ENCODE measurements at regions of chr19 and their contacts with region 1.

Region 1: DNA sequence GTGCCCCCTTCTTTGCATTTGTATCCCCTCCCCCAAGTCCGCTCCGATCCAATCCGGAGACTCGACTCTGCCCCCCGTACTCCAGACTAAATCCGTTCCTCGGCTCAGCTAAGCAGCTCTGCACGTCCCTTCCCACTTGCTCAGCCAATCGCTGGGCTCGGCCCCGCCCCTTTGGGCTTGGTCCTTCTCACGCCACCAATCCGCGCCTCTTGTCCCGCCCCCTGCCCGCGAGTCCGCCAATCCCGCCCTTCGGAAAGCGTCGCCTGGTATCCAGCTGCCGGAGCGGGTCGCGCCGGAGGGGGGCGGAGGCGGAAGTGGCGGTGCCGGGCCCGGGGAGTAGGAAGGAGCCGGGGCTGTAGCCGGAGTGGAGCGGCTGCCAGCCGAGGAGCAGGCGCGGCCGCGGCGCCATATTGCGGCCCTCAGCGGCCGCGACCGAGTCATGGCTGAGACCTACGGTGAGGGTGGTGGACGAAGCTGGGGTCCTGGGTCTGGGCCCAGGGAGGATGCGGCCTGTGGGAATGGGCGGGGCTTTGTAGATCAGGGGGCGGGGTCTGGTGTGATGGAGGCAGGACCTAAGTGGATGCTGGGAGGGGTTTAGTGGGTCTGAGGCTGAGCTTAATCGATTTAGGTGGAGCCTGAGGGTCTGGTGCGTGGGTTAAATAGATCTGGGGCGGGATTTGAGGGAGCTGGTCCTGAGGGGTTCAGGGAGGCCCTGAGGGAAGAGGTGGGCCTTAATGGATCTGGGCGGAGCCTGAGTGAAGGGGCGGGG is at the start of gene RAB4B:
- DNase-seq: peak; percentile 100
- H3K4me3 Mint-ChIP-seq: peak within 1 kb of the TSS; percentile 89
- H3K27ac Mint-ChIP-seq: peak within 1 kb of the TSS; percentile 99
- H3K4me1 Mint-ChIP-seq: peaks cover 39% of the 10 kb centered on the region
- H3K27me3 Mint-ChIP-seq: no peaks in the 10 kb centered on the region
- total RNA-seq, gene RAB4B: 52.8 to 54.7 TPM

Region 2: DNA sequence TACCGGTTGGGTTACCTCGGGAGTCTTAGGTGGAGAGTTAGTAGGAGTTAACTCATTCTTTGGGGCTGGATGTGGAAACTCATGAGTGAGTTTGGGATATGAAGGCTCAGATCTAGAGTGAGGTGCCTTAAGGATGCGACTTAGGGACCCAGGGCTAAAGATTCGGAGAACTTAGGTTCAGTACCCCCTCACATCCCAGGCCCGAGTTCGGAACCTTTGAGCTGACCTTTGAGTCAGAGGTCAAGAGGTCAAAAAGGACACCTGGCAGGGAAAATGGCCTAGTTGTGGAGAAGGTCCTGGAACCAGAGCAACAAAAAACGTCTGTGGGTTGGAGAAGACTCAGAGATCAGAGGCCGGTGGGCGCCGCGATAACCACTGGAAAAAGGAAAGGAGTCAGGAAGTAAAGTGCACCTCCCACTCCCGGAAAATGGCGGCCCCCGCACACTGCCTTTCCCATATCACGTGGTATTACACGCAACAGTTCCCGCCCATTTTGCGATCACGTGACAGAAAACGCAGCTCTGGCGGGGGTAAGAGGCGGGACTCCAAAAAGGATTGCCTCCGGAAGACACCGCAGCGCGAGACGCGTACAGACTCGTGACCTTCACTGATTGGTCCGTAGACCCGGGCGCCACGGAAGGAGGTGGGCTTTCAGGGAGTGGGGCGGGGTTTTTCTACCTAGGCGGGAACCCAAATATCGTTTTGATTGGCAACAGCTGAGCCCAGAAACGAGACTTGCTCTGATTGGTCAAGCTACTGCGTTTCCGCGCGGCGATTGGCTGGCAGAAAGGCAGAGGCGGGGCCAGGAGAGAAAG is 27.9 kb before region 1 on chr19 and contains the start of gene ACTMAP:
- CTCF ChIA-PET with region 1: interaction called, 25 read pairs
- POLR2A ChIA-PET with region 1: interaction called, 10 read pairs
- DNase-seq: peak; percentile 100
- H3K4me3 Mint-ChIP-seq: peak within 1 kb of the TSS; percentile 100
- H3K27ac Mint-ChIP-seq: peak within 1 kb of the TSS; percentile 100
- H3K4me1 Mint-ChIP-seq: peaks cover 40% of the 10 kb centered on the region
- H3K27me3 Mint-ChIP-seq: no peaks in the 10 kb centered on the region
- total RNA-seq, gene ACTMAP: 17.5 to 19.8 TPM

Region 3: GRCh38 chr19:40798223-40798996 is 20.3 kb after region 1 on chr19:
- CTCF ChIA-PET with region 1: interaction called, 22 read pairs
- POLR2A ChIA-PET with region 1: interaction called, 7 read pairs
- DNase-seq: peak; percentile 100
- H3K4me3 Mint-ChIP-seq: peak overlapping the region; percentile 87
- H3K27ac Mint-ChIP-seq: peak overlapping the region; percentile 95
- H3K4me1 Mint-ChIP-seq: peaks cover 50% of the 10 kb centered on the region
- H3K27me3 Mint-ChIP-seq: no peaks in the 10 kb centered on the region

Region 4: GRCh38 chr19:40836754-40837429 is 58.8 kb after region 1 on chr19:
- CTCF ChIA-PET with region 1: no interaction called
- POLR2A ChIA-PET with region 1: no interaction called
- DNase-seq: no peak
- H3K4me3 Mint-ChIP-seq: no peak overlapping the region
- H3K27ac Mint-ChIP-seq: no peak overlapping the region
- H3K4me1 Mint-ChIP-seq: peaks cover 18% of the 10 kb centered on the region
- H3K27me3 Mint-ChIP-seq: peaks cover 24% of the 10 kb centered on the region

Measured in activated CD4-positive, alpha-beta T cell treated with anti-CD3 and anti-CD28 coated beads, Interleukin-2, amount 10 ng/mL, durations not matched to agents 7 days and 5 days (primary cell).